MCF 10A (cell line): ENCODE measurements at regions of chr11 and their contacts with region 1.

Region 1: GRCh38 chr11:100930185-100930778 is 199.3 kb downstream of the PGR start:
- DNase-seq: peak; percentile 68
- H3K4me3 Mint-ChIP-seq: no peak overlapping the region
- H3K27ac Mint-ChIP-seq: no peak overlapping the region
- H3K4me1 Mint-ChIP-seq: no peaks in the 10 kb centered on the region
- H3K27me3 Mint-ChIP-seq: no peaks in the 10 kb centered on the region
- CTCF ChIP-seq: peak; percentile 73

Region 2: DNA sequence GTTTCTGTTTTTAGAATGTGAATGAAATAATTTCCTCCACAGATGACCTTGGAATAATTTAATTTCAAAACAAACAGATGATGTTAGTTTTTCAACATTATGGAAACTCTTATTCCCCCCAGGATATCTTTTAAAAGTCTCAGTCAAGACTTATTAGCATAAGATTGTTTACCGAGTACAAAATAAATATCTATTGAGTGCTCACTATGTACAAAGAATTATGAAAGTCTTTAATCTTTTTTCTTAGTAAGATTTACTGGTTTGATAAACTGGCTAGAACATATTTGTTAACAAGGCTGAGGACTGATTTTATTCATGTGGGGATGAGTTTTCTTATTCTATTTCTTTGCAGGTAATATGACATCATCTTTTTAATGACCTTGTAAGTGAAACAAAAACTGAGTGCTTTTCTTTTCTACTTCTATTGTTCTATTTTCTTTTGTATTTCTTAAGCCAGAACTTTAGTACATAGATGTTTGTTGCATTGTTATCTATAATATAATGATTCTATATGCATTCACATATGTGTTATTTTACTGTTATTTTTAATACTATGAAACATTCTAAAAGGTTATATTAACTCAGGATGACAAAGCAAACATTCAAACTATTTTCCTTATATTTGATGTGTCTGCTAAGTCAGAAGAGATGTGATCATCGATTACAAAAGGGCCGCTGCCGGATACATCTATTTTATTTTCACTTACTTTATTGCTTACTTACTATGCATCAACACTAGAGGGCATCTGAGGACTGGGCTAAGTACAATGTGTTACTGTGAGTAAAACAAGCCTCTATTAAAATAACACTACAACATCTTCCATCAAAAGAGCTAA is 354.2 kb before region 1 on chr11:
- CTCF ChIA-PET with region 1: interaction called, 22 read pairs
- POLR2A ChIA-PET with region 1: no interaction called
- intact Hi-C with region 1: loop called (anchors 1 kb)
- DNase-seq: peak; percentile 63
- H3K4me3 Mint-ChIP-seq: no peak overlapping the region
- H3K27ac Mint-ChIP-seq: no peak overlapping the region
- H3K4me1 Mint-ChIP-seq: no peaks in the 10 kb centered on the region
- H3K27me3 Mint-ChIP-seq: peaks cover 22% of the 10 kb centered on the region
- CTCF ChIP-seq: peak; percentile 66

Region 3: DNA sequence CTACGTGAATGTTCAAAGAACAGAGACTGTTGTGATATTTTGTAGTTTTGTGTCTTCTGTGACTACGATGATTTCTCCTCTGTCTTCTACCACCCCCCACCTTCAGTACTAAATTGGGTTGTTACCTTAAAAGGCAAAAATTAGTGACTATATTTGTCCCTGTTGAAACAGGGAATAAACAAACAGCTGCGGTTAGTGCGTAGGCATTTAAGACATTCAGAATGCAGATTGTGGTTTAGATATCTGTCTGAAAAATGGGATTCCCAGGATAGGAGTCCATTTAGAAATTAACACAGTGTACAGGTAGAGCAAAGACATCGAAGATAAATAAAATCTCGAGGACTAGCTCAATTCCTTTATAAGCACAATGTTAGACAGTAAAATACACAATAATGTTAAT is 258.8 kb before region 1 on chr11:
- CTCF ChIA-PET with region 1: no interaction called
- POLR2A ChIA-PET with region 1: no interaction called
- intact Hi-C with region 1: no loop called
- DNase-seq: no peak
- H3K4me3 Mint-ChIP-seq: no peak overlapping the region
- H3K27ac Mint-ChIP-seq: no peak overlapping the region
- H3K4me1 Mint-ChIP-seq: no peaks in the 10 kb centered on the region
- H3K27me3 Mint-ChIP-seq: no peaks in the 10 kb centered on the region
- CTCF ChIP-seq: no peak

Region 4: DNA sequence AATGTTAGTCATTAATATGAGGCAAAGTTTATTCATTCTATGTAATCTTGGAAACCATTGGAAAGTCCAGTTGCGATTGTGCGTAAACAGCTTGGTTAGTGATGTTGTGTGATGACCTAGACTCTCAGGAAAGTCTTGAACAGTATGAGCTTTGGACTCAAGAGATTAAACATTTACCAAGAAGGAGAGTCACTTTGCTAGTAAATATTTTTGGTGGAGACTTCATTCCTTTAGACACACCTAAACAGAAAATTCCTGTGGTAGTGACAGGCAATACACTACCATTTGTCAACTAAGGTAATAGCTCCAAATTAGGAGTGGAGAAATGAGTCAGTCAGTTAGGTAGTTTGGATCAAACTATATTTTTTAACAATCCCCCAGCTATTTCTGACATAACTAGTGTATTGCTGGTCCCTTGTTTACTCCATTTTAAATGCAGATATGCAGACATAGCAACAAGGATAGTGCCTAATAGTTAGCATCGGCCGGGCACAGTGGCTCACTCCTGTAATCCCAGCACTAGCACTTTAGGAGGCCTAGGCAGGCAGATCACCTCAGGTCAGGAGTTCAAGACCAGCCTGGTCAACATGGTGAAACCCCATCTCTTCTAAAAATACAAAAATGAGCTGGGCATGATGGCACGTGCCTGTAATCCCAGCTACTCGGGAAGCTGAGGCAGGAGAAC is 153.9 kb before region 1 on chr11:
- CTCF ChIA-PET with region 1: no interaction called
- POLR2A ChIA-PET with region 1: no interaction called
- intact Hi-C with region 1: no loop called
- DNase-seq: peak; percentile 57
- H3K4me3 Mint-ChIP-seq: no peak overlapping the region
- H3K27ac Mint-ChIP-seq: peak overlapping the region; percentile 91
- H3K4me1 Mint-ChIP-seq: peaks cover 20% of the 10 kb centered on the region
- H3K27me3 Mint-ChIP-seq: no peaks in the 10 kb centered on the region
- CTCF ChIP-seq: no peak

Region 5: GRCh38 chr11:101169944-101170343 is 239.7 kb after region 1 on chr11:
- CTCF ChIA-PET with region 1: no interaction called
- POLR2A ChIA-PET with region 1: no interaction called
- intact Hi-C with region 1: no loop called
- DNase-seq: no peak
- H3K4me3 Mint-ChIP-seq: no peak overlapping the region
- H3K27ac Mint-ChIP-seq: no peak overlapping the region
- H3K4me1 Mint-ChIP-seq: no peaks in the 10 kb centered on the region
- H3K27me3 Mint-ChIP-seq: peaks cover 13% of the 10 kb centered on the region
- CTCF ChIP-seq: no peak